SK-N-SH (cell line): ENCODE measurements at regions of chr21 and their contacts with region 1.

Region 1: GRCh38 chr21:42652527-42653230 is 742 bp upstream of the PDE9A start:
- DNase-seq: peak; percentile 98
- H3K4me3 ChIP-seq: peak overlapping the region in 1 of 2 experiments; percentile 43; a peak in 3 of 4 replicates
- H3K27ac ChIP-seq: peak overlapping the region in 1 of 2 experiments; percentile 98; a peak in 2 of 4 replicates
- H3K4me1 ChIP-seq: peaks cover 0 to 33% of the 10 kb centered on the region in 2 experiments; a peak in 1 of 4 replicates
- H3K27me3 ChIP-seq: peaks cover 35% of the 10 kb centered on the region
- CTCF ChIP-seq: peak; percentile 35
- EP300 ChIP-seq: peak in 1 of 2 experiments; percentile 69; a peak in 2 of 4 replicates
- RAD21 ChIP-seq: peak; percentile 74

Region 2: GRCh38 chr21:42641311-42642218 is 11.1 kb before region 1 on chr21:
- CTCF ChIA-PET with region 1: interaction called, 25 read pairs
- POLR2A ChIA-PET with region 1: interaction called, 8 read pairs
- DNase-seq: peak; percentile 49
- H3K4me3 ChIP-seq: no peak overlapping the region
- H3K27ac ChIP-seq: no peak overlapping the region
- H3K4me1 ChIP-seq: peaks cover 0 to 3% of the 10 kb centered on the region in 2 experiments; a peak in 1 of 4 replicates
- H3K27me3 ChIP-seq: no peaks in the 10 kb centered on the region
- CTCF ChIP-seq: no peak
- EP300 ChIP-seq: no peak
- RAD21 ChIP-seq: no peak

Region 3: GRCh38 chr21:42677339-42678321 is 25.0 kb after region 1 on chr21:
- CTCF ChIA-PET with region 1: interaction called, 20 read pairs
- POLR2A ChIA-PET with region 1: interaction called, 3 read pairs
- DNase-seq: peak; percentile 87
- H3K4me3 ChIP-seq: no peak overlapping the region
- H3K27ac ChIP-seq: peak overlapping the region in 1 of 2 experiments; percentile 90; a peak in 2 of 4 replicates
- H3K4me1 ChIP-seq: peaks cover 4 to 43% of the 10 kb centered on the region in 2 experiments; a peak in 3 of 4 replicates
- H3K27me3 ChIP-seq: no peaks in the 10 kb centered on the region
- CTCF ChIP-seq: no peak
- EP300 ChIP-seq: peak in 1 of 2 experiments; percentile 19; a peak in 1 of 4 replicates
- RAD21 ChIP-seq: no peak; the same call in 1 of the 2 replicates

Region 4: GRCh38 chr21:42818328-42818749 is 165.7 kb after region 1 on chr21:
- CTCF ChIA-PET with region 1: interaction called, 12 read pairs
- POLR2A ChIA-PET with region 1: no interaction called
- DNase-seq: peak; percentile 58
- H3K4me3 ChIP-seq: no peak overlapping the region
- H3K27ac ChIP-seq: no peak overlapping the region
- H3K4me1 ChIP-seq: no peaks in the 10 kb centered on the region
- H3K27me3 ChIP-seq: no peaks in the 10 kb centered on the region
- CTCF ChIP-seq: peak; percentile 56
- EP300 ChIP-seq: no peak
- RAD21 ChIP-seq: peak; percentile 71

Region 5: GRCh38 chr21:42923541-42924432 is 271.1 kb after region 1 on chr21:
- CTCF ChIA-PET with region 1: no interaction called
- POLR2A ChIA-PET with region 1: no interaction called
- DNase-seq: peak; percentile 81
- H3K4me3 ChIP-seq: no peak overlapping the region
- H3K27ac ChIP-seq: no peak overlapping the region
- H3K4me1 ChIP-seq: no peaks in the 10 kb centered on the region; a peak in 2 of 4 replicates
- H3K27me3 ChIP-seq: no peaks in the 10 kb centered on the region
- CTCF ChIP-seq: peak; percentile 73
- EP300 ChIP-seq: no peak
- RAD21 ChIP-seq: peak; percentile 82